Activated naive CD4-positive, alpha-beta T cell treated with anti-CD3 and anti-CD28 coated beads, Interleukin-2, amount 10 ng/mL, durations not matched to agents 7 days and 5 days (primary cell): ENCODE measurements at regions of chr5 and their contacts with region 1.

Region 1: DNA sequence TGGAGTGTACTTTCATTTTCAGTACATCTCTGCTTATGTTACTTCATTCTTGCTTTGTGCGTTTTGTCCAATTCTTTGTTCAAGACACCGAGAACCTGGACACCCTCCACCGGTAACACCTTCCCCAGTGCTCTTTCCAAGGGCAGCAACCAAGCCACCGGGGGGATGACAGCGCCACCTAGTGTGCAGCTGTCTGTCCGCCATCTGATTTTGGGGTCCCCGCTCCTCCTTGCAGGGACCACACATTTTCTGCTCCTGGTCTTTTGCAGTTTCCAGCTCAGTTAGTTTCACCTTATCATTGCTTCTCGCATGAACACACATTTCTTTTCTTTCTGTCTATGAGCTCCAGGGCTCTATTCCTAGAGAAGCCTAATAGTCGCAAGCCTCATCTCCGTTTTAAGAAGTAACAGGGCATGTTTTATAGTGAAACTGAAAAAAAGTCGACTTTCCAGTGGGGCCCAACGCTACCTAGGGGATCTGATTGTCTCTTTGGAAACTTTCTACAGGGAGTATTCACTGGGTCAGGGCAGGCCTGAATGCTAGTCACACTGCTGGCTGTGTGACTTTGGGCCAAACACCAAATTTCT is 152.1 kb downstream of the FSTL4 start:
- DNase-seq: peak; percentile 56
- H3K4me3 Mint-ChIP-seq: no peak overlapping the region
- H3K27ac Mint-ChIP-seq: no peak overlapping the region
- H3K4me1 Mint-ChIP-seq: no peaks in the 10 kb centered on the region
- H3K27me3 Mint-ChIP-seq: no peaks in the 10 kb centered on the region

Region 2: DNA sequence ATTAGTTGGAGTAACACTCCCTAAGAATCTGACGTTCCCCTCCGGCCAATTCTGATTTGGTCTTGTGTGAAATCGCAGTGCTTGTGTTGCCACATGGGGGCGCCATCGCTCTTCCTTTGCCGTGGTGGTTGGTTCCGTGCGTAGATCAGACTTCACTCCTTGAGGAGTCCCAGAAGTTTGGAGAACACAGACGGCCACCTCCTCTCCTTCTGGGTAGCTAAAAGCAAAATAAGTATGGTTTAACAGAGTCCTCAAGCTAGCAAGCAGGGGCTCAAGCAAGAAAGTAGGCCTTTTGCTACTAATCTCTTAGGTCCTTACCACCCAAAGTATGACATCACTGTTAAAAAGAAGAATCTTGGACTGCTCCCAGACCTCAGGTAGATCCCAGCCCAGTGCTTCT is 349.0 kb before region 1 on chr5:
- CTCF ChIA-PET with region 1: interaction called, 13 read pairs
- DNase-seq: peak; percentile 87
- H3K4me3 Mint-ChIP-seq: no peak overlapping the region
- H3K27ac Mint-ChIP-seq: no peak overlapping the region
- H3K4me1 Mint-ChIP-seq: peaks cover 21% of the 10 kb centered on the region
- H3K27me3 Mint-ChIP-seq: peaks cover 13% of the 10 kb centered on the region

Region 3: DNA sequence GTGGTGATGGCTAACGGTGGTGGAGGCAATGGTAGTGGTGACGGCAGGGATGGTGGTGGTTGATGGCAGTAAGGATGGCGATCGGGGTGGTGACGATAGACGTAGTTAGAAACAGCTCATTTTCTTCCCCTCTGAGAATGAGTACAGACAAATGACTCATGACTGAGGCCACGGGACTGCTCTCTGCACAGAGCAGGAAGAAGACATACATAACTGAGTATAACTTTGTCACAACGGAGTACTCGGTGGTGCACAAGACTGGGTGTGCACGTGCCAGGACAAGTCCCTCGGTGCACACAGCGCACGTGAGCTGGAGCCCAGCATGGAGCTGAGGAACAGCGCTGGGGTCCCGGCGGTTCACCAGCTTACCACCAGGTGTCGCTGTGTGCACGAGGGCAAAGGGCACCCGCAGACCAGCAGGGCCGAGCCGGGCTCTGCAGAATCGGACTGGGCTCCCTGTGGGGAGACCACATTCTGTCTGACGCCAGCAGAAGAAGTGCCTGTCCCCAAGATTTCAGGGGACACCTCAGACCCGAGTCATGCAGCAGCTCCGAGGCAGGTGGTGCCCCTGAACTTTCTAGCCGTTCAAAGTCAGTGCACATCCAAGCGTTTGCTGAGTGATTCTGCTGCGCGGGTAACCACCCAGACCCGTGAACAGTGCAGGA is 36.5 kb before region 1 on chr5:
- CTCF ChIA-PET with region 1: interaction called, 13 read pairs
- DNase-seq: peak; percentile 72
- H3K4me3 Mint-ChIP-seq: no peak overlapping the region
- H3K27ac Mint-ChIP-seq: no peak overlapping the region
- H3K4me1 Mint-ChIP-seq: peaks cover 4% of the 10 kb centered on the region
- H3K27me3 Mint-ChIP-seq: peaks cover 21% of the 10 kb centered on the region